ENCODE measurements at regions of chr5 and their contacts with region 1.

Region 1: DNA sequence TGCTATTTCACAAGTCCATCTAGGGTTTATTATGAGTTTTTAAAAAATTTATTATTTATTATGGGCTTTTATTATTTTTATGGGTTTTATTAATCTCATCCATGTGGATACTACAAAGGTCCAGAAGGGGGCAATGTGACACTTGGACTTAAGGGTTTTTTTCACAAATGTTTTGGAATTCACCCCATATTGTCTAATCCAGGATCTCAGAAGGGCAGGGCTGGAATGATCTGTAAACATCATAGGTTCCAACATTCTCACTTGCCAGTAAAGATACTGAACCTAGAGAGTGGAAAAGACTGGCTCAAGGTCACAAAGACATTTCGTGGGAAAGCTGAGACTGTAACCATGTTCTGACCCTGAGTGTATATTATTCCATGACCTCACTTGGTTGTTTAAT is 35.6 kb downstream of the NIM1K start:
- DNase-seq: no peak
- ATAC-seq: no peak
- H3K4me3 ChIP-seq: no peak overlapping the region
- H3K27ac ChIP-seq: no peak overlapping the region
- H3K4me1 ChIP-seq: no peaks in the 10 kb centered on the region
- H3K27me3 ChIP-seq: no peaks in the 10 kb centered on the region
- CTCF ChIP-seq: peak in 8 of 9 donors; percentile 10 to 60 (median 42)

Region 2: DNA sequence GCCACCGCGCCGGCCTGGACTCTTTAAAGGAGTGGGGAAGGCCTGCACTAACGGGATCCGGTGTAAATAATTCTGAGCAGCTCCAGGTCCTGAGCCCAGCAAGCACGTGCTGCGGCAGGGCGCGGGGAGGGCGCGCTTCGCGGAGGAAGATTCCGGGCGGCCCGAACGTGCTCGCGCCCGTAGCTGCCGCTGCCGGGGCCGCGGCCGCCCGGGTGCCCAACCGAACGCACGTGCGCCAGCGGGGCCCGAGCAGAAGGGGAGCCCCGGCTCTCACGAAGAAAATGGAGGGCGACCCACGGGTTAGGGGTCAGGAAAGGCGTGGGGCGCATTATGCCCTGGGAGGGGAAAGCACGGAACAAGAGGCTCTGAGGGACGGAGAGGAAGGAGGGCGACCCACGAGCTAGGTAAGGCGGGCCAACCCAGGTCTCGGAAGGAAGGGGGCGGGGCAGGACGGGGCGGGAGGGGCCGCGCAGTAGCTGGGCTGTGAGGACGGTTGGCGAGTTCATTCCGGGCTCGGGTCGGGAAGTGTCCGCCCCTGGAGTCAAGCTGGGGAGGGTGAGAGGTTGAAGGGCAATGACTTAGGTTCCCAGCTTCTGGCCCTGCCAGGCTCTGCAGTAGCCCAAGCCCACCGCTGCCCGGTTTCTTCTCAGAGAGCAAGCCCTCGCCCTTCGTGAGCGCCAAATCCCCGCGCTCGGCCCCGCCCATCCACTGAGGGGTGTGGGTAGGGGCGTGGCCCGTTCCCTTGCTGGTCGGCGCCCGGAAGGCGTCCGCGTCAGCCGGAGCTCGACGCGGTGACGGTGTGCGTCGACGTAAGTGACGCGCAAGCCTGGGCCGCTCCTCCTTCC is 106.7 kb before region 1 on chr5 and contains the start of gene ZNF131:
- intact Hi-C with region 1: no loop called
- DNase-seq: peak; percentile 95 to 97
- ATAC-seq: peak; percentile 98 to 100 (median 99)
- H3K4me3 ChIP-seq: peak within 1 kb of the TSS; percentile 73 to 97 (median 88)
- H3K27ac ChIP-seq: peak within 1 kb of the TSS; percentile 86 to 100 (median 97)
- H3K4me1 ChIP-seq: peaks cover 3 to 56% (median 29%) of the 10 kb centered on the region in 9 donors
- H3K27me3 ChIP-seq: no peaks in the 10 kb centered on the region
- CTCF ChIP-seq: no peak
- total RNA-seq, gene ZNF131: 13.4 to 20.6 (median 16.8) TPM

Region 3: GRCh38 chr5:43305948-43306565 is 78.4 kb after region 1 on chr5:
- intact Hi-C with region 1: loop called in 4 of 10 experiments (anchors 5 to 10 kb)
- DNase-seq: no peak
- ATAC-seq: peak in 5 of 8 donors; percentile 56 to 73 (median 61)
- H3K4me3 ChIP-seq: no peak overlapping the region
- H3K27ac ChIP-seq: no peak overlapping the region
- H3K4me1 ChIP-seq: peaks cover 0 to 73% (median 22%) of the 10 kb centered on the region in 9 donors
- H3K27me3 ChIP-seq: no peaks in the 10 kb centered on the region
- CTCF ChIP-seq: peak; percentile 23 to 79 (median 70)